Esophagus muscularis mucosa (tissue), 4 donors: ENCODE measurements at regions of chr1 and their contacts with region 1.

Region 1: GRCh38 chr1:242542271-242542670 is 17.8 kb upstream of the PLD5 start:
- DNase-seq: no peak
- H3K4me3 ChIP-seq: no peak overlapping the region
- H3K27ac ChIP-seq: no peak overlapping the region
- H3K4me1 ChIP-seq: no peaks in the 10 kb centered on the region
- H3K27me3 ChIP-seq: peaks cover 0 to 3% (median 0%) of the 10 kb centered on the region in 4 donors
- CTCF ChIP-seq: no peak
- EP300 ChIP-seq: no peak
- POLR2A ChIP-seq: no peak

Region 2: DNA sequence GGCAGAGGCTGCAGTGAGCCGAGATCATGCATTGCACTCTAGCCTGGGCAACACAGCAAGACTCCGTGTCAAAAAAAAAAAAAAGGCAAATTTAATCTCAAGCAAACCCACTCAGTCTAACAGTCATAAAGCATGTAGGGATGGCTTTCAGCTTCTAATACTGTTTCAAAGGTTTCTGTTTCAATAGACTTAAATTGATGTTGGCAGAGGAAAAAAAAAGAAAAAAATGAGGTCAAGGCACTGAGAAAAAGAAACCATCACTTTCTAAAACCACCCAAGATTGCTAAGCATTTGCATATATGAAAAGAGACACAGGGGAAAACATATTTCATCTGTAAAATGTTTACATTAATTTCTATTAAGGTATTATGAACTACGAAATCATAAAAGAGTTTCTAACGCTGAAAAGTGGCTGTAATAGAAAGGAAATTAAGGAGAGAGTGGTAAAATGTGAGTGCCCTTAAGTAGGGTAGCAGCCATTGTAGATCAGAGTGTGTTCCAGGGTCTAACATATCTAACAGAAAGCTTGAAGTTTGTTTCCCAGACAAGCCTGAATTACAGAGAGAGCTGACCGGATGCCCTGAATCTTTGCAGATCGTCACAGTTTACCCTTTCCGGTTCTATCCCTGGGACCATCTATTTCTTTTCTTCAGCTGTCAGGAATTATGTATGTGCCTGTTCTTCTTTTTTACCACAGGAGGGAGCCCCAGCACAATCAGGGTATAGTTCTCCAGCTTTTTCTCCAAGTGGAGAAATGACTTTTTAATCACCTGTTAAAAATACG is 87.8 kb before region 1 on chr1:
- intact Hi-C with region 1: no loop called
- DNase-seq: peak; percentile 50
- H3K4me3 ChIP-seq: no peak overlapping the region
- H3K27ac ChIP-seq: no peak overlapping the region
- H3K4me1 ChIP-seq: peaks cover 0 to 7% (median 0%) of the 10 kb centered on the region in 4 donors
- H3K27me3 ChIP-seq: peaks cover 0 to 51% (median 0%) of the 10 kb centered on the region in 4 donors
- CTCF ChIP-seq: peak; percentile 32 to 66 (median 45)
- EP300 ChIP-seq: no peak
- POLR2A ChIP-seq: no peak

Region 3: DNA sequence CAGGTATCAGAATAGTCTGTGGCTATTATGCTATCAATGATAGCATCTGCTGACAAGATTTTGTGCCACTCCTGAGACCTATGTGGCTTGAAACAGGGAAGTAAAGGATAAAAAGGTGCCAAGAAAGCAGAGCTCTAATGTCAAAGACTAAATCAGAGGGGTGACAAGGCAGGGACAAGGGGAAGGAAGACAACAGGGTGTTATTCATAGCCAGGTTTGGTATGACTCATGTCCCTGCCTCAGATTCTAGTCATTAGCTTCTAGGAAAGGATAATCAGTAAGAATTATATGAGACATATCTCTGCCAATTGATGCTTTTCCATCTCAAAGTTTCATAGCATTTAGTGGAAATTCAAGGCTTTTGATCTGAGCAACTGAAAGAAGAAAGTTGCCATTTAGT is 14.0 kb after region 1 on chr1:
- intact Hi-C with region 1: loop called (anchors 2 kb)
- DNase-seq: no peak
- H3K4me3 ChIP-seq: no peak overlapping the region
- H3K27ac ChIP-seq: no peak overlapping the region
- H3K4me1 ChIP-seq: no peaks in the 10 kb centered on the region
- H3K27me3 ChIP-seq: no peaks in the 10 kb centered on the region
- CTCF ChIP-seq: no peak
- EP300 ChIP-seq: no peak
- POLR2A ChIP-seq: no peak

Region 4: DNA sequence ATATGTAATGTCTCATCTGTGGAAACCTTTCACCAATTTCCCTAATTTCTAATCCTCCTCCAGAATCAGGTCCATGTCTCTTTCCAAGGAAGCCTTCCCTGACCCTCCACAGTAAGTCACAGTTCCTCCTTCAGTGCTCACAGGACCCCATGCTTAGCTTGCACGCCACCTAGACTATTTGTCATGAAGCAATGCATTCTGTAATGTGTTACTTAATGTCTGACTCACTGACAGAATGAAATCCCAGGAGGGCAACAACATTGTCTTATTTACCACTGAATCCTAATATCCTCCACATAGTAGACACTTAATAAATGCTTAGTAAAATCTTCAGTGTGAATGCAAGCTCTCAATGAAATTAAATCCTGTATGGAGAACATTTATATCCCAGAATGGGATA is 228.1 kb after region 1 on chr1:
- intact Hi-C with region 1: no loop called
- DNase-seq: no peak
- H3K4me3 ChIP-seq: no peak overlapping the region
- H3K27ac ChIP-seq: no peak overlapping the region
- H3K4me1 ChIP-seq: no peaks in the 10 kb centered on the region
- H3K27me3 ChIP-seq: no peaks in the 10 kb centered on the region
- CTCF ChIP-seq: no peak
- EP300 ChIP-seq: no peak
- POLR2A ChIP-seq: no peak